Endothelial cell of umbilical vein (primary cell): ENCODE measurements at regions of chr6 and their contacts with region 1.

Region 1: GRCh38 chr6:100116411-100117194 is 122.6 kb upstream of the MCHR2 start:
- DNase-seq: peak; percentile 82
- H3K4me3 ChIP-seq: no peak overlapping the region
- H3K27ac ChIP-seq: no peak overlapping the region
- H3K4me1 ChIP-seq: no peaks in the 10 kb centered on the region
- H3K27me3 ChIP-seq: peaks cover 0 to 3% of the 10 kb centered on the region in 2 experiments
- CTCF ChIP-seq: peak; percentile 55 to 59
- POLR2A ChIP-seq: no peak

Region 2: GRCh38 chr6:100099189-100100074 is 17.2 kb before region 1 on chr6:
- CTCF ChIA-PET with region 1: interaction called, 24 read pairs
- POLR2A ChIA-PET with region 1: no interaction called
- dilution Hi-C with region 1: no loop called
- intact Hi-C with region 1: no loop called
- DNase-seq: peak; percentile 44
- H3K4me3 ChIP-seq: no peak overlapping the region
- H3K27ac ChIP-seq: no peak overlapping the region
- H3K4me1 ChIP-seq: no peaks in the 10 kb centered on the region
- H3K27me3 ChIP-seq: peaks cover 8 to 34% of the 10 kb centered on the region in 2 experiments
- CTCF ChIP-seq: peak; percentile 26 to 27
- POLR2A ChIP-seq: no peak

Region 3: DNA sequence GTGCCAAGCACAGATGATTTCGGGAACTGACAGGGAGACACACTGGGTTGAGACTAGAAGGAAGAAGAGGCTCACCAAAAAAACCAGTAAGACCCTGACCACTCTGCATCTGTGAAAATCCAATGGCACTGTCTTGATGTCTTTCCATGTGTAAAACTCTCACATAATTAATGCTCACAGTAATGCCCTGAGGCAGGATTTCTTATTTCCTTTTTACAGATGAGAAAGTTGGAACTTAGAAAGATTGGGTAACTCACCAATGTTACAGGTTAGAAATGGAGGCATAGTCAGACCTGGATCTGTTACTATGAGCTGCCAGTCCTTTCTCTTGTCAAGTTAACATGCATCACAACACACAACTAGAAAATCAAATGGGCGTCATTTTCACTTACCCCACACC is 28.4 kb after region 1 on chr6:
- CTCF ChIA-PET with region 1: no interaction called
- POLR2A ChIA-PET with region 1: no interaction called
- dilution Hi-C with region 1: no loop called
- intact Hi-C with region 1: no loop called
- DNase-seq: no peak
- H3K4me3 ChIP-seq: no peak overlapping the region
- H3K27ac ChIP-seq: no peak overlapping the region
- H3K4me1 ChIP-seq: no peaks in the 10 kb centered on the region
- H3K27me3 ChIP-seq: peaks cover 0 to 1% of the 10 kb centered on the region in 2 experiments
- CTCF ChIP-seq: no peak
- POLR2A ChIP-seq: no peak

Region 4: GRCh38 chr6:100176311-100176950 is 59.8 kb after region 1 on chr6:
- CTCF ChIA-PET with region 1: interaction called, 14 read pairs
- POLR2A ChIA-PET with region 1: no interaction called
- dilution Hi-C with region 1: no loop called
- intact Hi-C with region 1: no loop called
- DNase-seq: peak; percentile 54
- H3K4me3 ChIP-seq: no peak overlapping the region
- H3K27ac ChIP-seq: no peak overlapping the region
- H3K4me1 ChIP-seq: no peaks in the 10 kb centered on the region
- H3K27me3 ChIP-seq: no peaks in the 10 kb centered on the region
- CTCF ChIP-seq: peak; percentile 29 to 33
- POLR2A ChIP-seq: no peak

Region 5: GRCh38 chr6:100217225-100218012 is 100.8 kb after region 1 on chr6:
- CTCF ChIA-PET with region 1: no interaction called
- POLR2A ChIA-PET with region 1: no interaction called
- dilution Hi-C with region 1: no loop called
- intact Hi-C with region 1: no loop called
- DNase-seq: no peak
- H3K4me3 ChIP-seq: no peak overlapping the region
- H3K27ac ChIP-seq: no peak overlapping the region
- H3K4me1 ChIP-seq: peaks cover 4% of the 10 kb centered on the region
- H3K27me3 ChIP-seq: no peaks in the 10 kb centered on the region
- CTCF ChIP-seq: no peak
- POLR2A ChIP-seq: no peak

Region 6: GRCh38 chr6:100300221-100300736 is 183.7 kb after region 1 on chr6:
- CTCF ChIA-PET with region 1: interaction called, 3 read pairs
- POLR2A ChIA-PET with region 1: no interaction called
- dilution Hi-C with region 1: no loop called
- intact Hi-C with region 1: loop called (anchors 2 kb)
- DNase-seq: peak; percentile 85
- H3K4me3 ChIP-seq: no peak overlapping the region
- H3K27ac ChIP-seq: peak overlapping the region; percentile 100
- H3K4me1 ChIP-seq: peaks cover 74% of the 10 kb centered on the region
- H3K27me3 ChIP-seq: no peaks in the 10 kb centered on the region
- CTCF ChIP-seq: no peak
- POLR2A ChIP-seq: peak; percentile 29

Region 7: DNA sequence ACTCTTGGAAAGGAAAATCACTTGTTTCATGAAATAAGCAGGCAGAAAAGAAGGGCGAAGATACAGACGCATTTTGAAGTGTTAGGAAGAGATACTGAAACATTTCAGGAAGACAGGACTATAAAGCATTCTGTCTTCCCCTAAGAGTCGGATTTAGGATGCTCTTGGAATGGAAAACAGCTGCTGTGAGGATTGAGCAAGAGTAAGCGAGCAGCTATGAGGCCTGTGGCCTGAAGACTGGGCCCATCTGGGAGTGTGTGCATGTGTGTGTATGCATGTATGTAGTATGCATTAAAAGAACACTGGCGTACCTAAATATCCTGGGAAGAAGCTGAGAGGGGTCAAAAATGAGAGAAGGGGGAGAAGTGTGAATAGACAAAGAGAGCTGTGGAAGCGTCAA is 264.5 kb after region 1 on chr6:
- CTCF ChIA-PET with region 1: no interaction called
- POLR2A ChIA-PET with region 1: no interaction called
- dilution Hi-C with region 1: no loop called
- intact Hi-C with region 1: no loop called
- DNase-seq: peak; percentile 17
- H3K4me3 ChIP-seq: no peak overlapping the region
- H3K27ac ChIP-seq: no peak overlapping the region
- H3K4me1 ChIP-seq: peaks cover 12% of the 10 kb centered on the region
- H3K27me3 ChIP-seq: no peaks in the 10 kb centered on the region
- CTCF ChIP-seq: no peak
- POLR2A ChIP-seq: no peak

Region 8: DNA sequence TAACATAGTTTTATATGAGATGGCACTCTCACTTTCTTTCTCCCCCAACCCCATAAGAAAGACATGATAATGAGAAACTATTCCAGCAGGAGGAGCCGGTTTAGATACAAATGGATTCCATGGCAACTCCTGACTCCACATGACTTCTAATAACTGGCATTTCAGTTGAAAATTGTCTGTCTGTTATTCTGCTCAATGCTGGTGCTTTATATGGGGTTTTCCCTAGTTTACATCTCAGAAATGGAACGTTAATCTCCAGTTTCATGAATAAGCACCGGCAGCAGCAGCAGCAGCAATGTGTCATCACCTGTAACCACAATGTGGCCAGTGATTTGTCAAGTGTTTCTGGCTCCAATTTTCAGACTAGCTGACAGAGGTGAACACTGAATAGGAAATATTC is 356.1 kb after region 1 on chr6:
- CTCF ChIA-PET with region 1: interaction called, 27 read pairs
- POLR2A ChIA-PET with region 1: no interaction called
- dilution Hi-C with region 1: loop called (anchors 25 kb)
- intact Hi-C with region 1: no loop called
- DNase-seq: no peak
- H3K4me3 ChIP-seq: no peak overlapping the region
- H3K27ac ChIP-seq: no peak overlapping the region
- H3K4me1 ChIP-seq: no peaks in the 10 kb centered on the region
- H3K27me3 ChIP-seq: peaks cover 38 to 62% of the 10 kb centered on the region in 2 experiments
- CTCF ChIP-seq: no peak
- POLR2A ChIP-seq: no peak

Region 9: GRCh38 chr6:100573167-100573566 is 456.6 kb after region 1 on chr6:
- CTCF ChIA-PET with region 1: interaction called, 11 read pairs
- POLR2A ChIA-PET with region 1: no interaction called
- dilution Hi-C with region 1: no loop called
- intact Hi-C with region 1: loop called (anchors 1 kb)
- DNase-seq: peak; percentile 54
- H3K4me3 ChIP-seq: no peak overlapping the region
- H3K27ac ChIP-seq: no peak overlapping the region
- H3K4me1 ChIP-seq: no peaks in the 10 kb centered on the region
- H3K27me3 ChIP-seq: no peaks in the 10 kb centered on the region
- CTCF ChIP-seq: peak; percentile 27 to 28
- POLR2A ChIP-seq: no peak

Region 10: DNA sequence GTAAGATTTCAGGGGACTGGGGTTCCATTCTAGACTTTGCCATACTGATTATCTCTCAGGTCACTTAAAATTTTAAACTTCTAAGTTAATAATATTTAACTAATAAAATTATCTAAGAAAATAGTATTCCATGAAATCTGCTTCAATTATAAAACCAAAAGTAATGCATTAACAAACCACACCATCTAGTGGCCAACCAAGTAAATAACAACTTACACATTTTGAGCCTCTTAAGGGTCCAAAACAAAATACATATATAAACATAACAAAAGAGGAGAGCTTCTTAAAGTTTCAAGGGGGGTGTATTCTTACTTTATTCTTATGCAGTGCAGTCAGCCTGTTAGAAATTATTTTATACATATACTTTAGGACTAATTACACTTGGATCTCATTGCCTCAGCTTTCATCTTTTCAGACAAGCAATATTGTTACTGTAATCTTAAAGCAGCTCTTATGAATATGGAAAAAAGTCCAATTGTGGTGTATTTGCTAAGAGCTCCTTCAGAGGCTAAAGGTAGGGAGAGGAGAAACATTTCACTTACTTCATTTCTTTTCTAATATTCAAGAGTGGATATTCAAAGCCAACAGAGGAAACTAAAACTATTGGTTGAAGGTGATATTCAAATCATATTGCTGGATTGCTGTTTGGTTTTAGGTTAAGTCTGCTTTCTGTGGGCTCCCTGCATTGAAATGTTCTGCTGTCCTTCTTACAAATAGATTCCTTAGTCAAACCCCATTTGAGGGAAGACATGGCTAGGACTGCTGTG is 547.9 kb after region 1 on chr6:
- CTCF ChIA-PET with region 1: interaction called, 62 read pairs
- POLR2A ChIA-PET with region 1: no interaction called
- dilution Hi-C with region 1: no loop called
- intact Hi-C with region 1: loop called (anchors 2 kb)
- DNase-seq: peak; percentile 40
- H3K4me3 ChIP-seq: no peak overlapping the region
- H3K27ac ChIP-seq: no peak overlapping the region
- H3K4me1 ChIP-seq: peaks cover 4% of the 10 kb centered on the region
- H3K27me3 ChIP-seq: no peaks in the 10 kb centered on the region
- CTCF ChIP-seq: peak; percentile 26 to 32
- POLR2A ChIP-seq: no peak